ENCODE measurements at regions of chr11 and their contacts with region 1.

Region 1: DNA sequence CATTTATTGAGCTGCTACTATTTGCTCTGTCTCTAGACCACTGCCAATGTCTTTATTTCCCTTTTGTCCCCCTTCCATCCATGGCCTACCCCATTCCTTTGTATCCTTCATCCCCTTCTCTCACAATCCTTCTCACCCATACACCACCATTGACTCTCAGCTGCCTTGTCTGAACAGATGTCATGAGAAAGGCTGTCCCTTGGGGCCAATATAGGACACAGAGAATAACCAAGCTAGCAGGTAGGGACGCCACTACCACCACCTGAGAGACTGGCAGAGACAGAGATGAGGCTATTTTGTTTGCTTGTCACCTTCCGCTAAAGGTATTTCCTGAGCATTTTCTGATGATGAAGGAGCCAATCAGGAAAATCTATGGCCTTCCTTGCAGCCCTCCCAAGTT is 138.9 kb downstream of the CD44 start:
- DNase-seq: no peak
- H3K4me3 ChIP-seq: no peak overlapping the region
- H3K27ac ChIP-seq: no peak overlapping the region
- H3K4me1 ChIP-seq: peaks cover 21% of the 10 kb centered on the region
- H3K27me3 ChIP-seq: no peaks in the 10 kb centered on the region
- CTCF ChIP-seq: no peak

Region 2: GRCh38 chr11:35200811-35201341 is 77.0 kb before region 1 on chr11:
- CTCF ChIA-PET with region 1: no interaction called
- POLR2A ChIA-PET with region 1: no interaction called
- intact Hi-C with region 1: no loop called
- DNase-seq: no peak
- H3K4me3 ChIP-seq: no peak overlapping the region
- H3K27ac ChIP-seq: no peak overlapping the region
- H3K4me1 ChIP-seq: no peaks in the 10 kb centered on the region
- H3K27me3 ChIP-seq: no peaks in the 10 kb centered on the region
- CTCF ChIP-seq: no peak

Region 3: GRCh38 chr11:35245786-35246185 is 32.0 kb before region 1 on chr11:
- CTCF ChIA-PET with region 1: interaction called, 11 read pairs
- POLR2A ChIA-PET with region 1: no interaction called
- intact Hi-C with region 1: no loop called
- DNase-seq: no peak
- H3K4me3 ChIP-seq: no peak overlapping the region
- H3K27ac ChIP-seq: no peak overlapping the region
- H3K4me1 ChIP-seq: no peaks in the 10 kb centered on the region
- H3K27me3 ChIP-seq: no peaks in the 10 kb centered on the region
- CTCF ChIP-seq: no peak

Measured in PC-9 (cell line).